ENCODE measurements at regions of chr21 and their contacts with region 1.

Region 1: DNA sequence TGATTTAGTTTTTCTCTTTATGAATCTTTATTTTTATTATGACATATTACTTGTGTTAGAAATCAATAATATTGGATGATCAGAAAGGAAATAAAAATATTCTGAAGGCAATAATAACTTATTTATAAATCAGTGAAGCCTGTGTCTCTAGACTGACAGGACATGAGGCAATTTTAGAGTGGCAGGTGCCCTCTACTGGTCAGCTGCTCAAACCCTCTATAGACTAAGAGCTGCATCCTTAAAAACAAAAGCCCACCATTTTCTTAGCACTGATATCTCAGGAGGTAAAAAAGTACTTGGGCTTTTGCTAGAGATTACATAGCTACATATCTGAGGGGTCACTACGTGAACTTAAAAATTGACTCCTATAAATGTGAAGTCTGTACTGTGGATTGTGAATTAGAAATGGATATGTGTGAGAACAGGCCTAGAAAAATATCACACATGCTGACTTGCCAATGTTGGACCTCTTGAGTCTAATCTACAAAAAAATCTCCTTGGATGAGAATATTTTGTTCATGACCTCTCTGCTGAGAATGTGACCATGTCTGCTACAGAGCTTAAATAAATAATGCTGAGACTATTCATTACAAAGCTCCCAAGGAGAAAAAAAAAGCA is 597.9 kb upstream of the ADAMTS5 start:
- DNase-seq: no peak
- H3K4me3 ChIP-seq: no peak overlapping the region
- CTCF ChIP-seq: no peak
- POLR2A ChIP-seq: no peak

Region 2: DNA sequence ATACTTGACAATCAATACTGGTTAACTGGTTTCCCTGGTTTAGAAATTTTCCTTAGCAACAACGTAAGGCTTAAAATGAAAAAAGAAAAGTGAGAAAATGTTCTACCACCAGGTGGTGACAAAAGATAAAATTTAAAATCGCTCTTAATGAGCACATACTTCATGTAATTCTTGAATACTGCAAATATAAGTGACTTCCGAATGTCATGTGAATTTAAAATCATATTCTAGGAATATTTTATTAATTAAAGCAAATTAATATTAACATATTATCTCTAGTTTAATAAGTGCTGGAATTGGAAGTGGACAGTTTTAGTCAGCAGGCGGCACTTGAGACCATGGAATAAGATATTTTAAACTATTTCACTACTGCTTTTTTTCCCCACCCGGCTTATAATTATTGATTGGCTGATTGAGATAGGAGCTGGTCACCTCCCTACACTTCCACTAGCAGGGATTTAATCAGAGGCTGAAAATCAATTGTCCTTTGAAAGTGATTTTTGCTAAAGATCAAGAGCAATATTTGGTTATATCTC is 714.6 kb before region 1 on chr21:
- intact Hi-C with region 1: loop called (anchors 5 kb)
- DNase-seq: no peak
- H3K4me3 ChIP-seq: no peak overlapping the region
- CTCF ChIP-seq: peak in 1 of 3 donors; percentile 76
- POLR2A ChIP-seq: no peak

Region 3: GRCh38 chr21:28127175-28127785 is 562.5 kb after region 1 on chr21:
- intact Hi-C with region 1: no loop called
- DNase-seq: no peak
- H3K4me3 ChIP-seq: no peak overlapping the region
- CTCF ChIP-seq: no peak
- POLR2A ChIP-seq: no peak